Dorsolateral prefrontal cortex (tissue), 120 donors: ENCODE measurements at regions of chr4 and their contacts with region 1.

Region 1: DNA sequence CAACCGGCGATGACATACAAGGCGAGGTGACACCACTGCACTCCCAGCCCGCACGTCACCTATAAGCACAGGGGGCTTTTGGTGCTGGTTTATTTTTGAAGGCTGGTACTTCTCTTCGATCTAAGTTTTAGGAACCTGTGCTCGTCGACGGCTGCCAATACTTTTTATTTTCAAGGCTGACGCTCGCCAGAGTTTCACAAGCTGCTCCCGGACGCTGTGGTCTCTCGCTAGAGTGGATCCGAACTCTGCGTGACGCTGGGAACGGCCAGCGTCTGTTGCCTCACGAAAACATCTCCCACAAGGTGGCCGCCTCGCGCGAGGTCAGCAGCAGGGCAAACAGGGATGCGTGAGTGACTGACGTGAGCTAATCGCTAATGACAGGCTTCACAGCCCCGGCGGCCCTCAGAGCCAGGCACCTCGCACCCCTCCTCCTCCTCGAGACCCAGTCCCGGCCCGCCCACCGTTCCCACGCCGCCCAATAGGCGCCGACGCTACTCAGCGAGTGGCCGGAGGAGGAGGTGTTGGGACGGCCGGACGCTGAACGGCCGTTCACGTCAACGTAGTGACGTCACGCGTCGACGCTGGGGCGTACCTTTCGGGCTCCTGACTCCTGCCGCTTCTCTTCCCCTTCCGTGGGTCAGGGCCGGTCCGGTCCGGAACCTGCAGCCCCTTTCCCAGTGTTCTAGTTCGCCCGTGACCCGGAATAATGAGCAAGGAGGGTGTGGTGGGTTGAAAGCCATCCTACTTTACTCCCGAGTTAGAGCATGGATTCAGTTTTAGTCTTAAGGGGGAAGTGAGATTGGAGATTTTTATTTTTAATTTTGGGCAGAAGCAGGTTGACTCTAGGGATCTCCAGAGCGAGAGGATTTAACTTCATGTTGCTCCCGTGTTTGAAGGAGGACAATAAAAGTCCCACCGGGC is at the start of gene CLCN3:
- DNase-seq: peak; percentile 90 to 99 (median 98)
- H3K4me3 ChIP-seq: peak within 1 kb of the TSS; percentile 61 to 95 (median 85)
- H3K27ac ChIP-seq: peak within 1 kb of the TSS; percentile 75 to 99 (median 96)
- H3K27me3 ChIP-seq: no peaks in the 10 kb centered on the region
- CTCF ChIP-seq: peak in 41 of 56 donors; percentile 8 to 62 (median 41)
- total RNA-seq, gene CLCN3: 60.7 to 119 (median 90.2) TPM

Region 2: DNA sequence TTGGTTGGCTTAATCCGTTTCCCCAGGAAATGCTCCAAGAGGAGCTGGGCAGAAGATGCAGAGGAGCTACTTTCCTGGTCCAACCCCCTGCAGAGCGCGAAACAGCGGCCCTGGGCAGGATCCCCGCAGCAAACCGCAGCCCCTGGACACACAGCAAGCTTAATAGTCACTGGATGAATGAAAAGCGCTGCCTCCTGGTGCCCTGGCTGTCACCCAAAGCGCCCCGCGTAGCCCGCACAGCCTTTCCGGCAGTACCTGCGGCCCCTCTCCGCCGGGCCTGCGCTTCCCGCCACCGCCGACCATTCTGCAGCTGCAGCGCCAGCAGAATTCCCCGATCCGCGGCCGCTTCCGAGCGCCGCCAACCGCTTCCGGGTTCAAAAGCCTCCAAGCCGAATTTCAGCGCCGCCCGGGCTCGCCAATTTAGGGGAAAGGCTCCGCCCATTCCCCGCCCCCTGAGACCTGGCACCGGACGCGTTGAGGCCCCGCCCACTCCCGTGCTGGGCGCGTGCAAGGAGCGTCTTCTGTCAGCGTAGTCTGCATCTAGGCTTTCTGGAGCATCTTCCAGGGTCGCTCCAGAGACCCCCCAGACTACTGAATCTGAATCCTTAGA is 137.5 kb after region 1 on chr4 and contains the start of gene HPF1:
- intact Hi-C with region 1: loop called (anchors 10 kb)
- DNase-seq: peak; percentile 80 to 94 (median 91)
- H3K4me3 ChIP-seq: peak within 1 kb of the TSS; percentile 62 to 97 (median 85)
- H3K27ac ChIP-seq: peak within 1 kb of the TSS; percentile 4 to 90 (median 78)
- H3K27me3 ChIP-seq: no peaks in the 10 kb centered on the region
- CTCF ChIP-seq: peak in 40 of 56 donors; percentile 10 to 57 (median 34)
- total RNA-seq, gene HPF1: 12.5 to 45.8 (median 29.3) TPM

Region 3: DNA sequence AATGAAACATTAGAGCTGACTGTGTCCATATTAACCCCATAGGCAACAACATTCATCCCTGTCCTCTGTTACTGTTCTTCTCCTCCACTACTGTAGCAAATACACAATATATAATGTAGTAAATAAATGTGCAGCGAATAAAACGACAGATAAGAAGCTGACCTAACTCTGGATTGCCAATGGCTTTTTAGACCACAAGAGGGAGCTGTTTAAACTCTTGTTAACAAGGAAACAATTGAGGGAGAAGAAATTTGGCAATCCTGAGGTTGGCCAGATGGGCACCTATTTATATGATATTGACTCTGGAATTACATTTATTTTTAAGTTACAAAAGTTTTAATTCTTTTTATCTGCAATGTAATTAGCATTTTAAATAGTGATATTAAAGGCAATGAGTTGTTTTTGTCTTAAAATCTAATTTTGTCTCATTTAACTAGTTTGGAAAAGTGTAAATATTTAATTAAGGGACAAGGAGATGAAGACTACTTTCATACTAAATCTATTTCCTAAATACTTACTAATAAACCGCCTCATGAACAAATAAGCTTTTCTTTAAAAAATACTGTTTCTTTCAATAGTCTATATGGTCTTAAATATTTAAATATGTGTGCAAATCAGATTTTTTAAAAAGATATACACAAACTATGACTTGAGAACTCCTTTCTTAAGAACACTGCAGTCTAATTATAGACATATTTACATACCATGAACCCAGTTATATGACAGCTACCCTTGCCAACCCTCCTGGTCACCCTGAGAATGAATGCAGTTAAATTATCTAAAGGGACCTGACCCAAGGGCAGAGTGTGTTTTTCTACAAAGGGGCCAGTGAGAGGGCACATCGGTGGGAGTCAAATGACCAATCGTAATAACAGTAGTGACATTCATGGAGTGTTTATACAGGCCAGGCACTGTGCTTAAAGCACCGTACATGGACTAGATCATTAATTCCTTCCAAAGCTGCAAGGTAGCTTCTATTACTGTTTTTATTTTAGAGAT is 190.4 kb after region 1 on chr4:
- intact Hi-C with region 1: loop called in 1 of 2 experiments (anchors 5 kb)
- DNase-seq: peak in 2 of 10 donors; percentile 24 to 31
- H3K4me3 ChIP-seq: peak overlapping the region in 33 of 59 donors; percentile 2 to 49 (median 24)
- H3K27ac ChIP-seq: peak overlapping the region in 6 of 59 donors; percentile 0 to 62 (median 46)
- H3K27me3 ChIP-seq: no peaks in the 10 kb centered on the region
- CTCF ChIP-seq: peak; percentile 63 to 98 (median 93)

Region 4: GRCh38 chr4:169899295-169899694 is 279.1 kb after region 1 on chr4:
- intact Hi-C with region 1: no loop called
- DNase-seq: no peak
- H3K4me3 ChIP-seq: no peak overlapping the region
- H3K27ac ChIP-seq: no peak overlapping the region
- H3K27me3 ChIP-seq: no peaks in the 10 kb centered on the region
- CTCF ChIP-seq: no peak

Region 5: DNA sequence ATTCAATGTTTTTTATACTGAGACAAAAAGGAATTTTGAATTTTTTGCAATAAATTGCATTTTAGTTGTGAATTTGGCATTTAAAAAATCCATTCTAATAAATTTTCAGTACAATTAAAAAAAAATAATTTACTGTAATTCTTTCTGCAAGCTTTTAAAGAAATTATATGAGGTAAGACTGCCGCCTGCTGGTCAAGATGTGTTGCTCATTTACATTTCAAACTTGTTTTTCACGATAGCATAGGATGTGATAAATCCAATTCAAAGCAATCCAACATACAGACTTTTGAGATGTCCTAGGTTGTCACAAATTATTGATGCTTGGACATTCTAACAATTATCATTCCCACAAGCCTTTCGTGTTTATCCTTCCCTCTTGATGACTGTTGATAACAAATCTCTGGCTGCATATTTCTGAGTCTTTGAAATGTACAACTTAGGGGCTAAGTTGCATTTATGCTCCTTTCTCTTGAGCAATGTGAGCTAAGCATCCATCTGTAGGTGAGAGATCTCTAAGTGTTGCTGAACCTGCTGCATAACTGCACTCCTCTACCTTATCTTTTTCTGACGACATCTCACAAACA is 427.6 kb after region 1 on chr4:
- intact Hi-C with region 1: loop called (anchors 5 to 10 kb)
- DNase-seq: peak in 6 of 10 donors; percentile 41 to 78 (median 56)
- H3K4me3 ChIP-seq: no peak overlapping the region
- H3K27ac ChIP-seq: no peak overlapping the region
- H3K27me3 ChIP-seq: no peaks in the 10 kb centered on the region
- CTCF ChIP-seq: peak; percentile 70 to 98 (median 90)